Naive thymus-derived CD4-positive, alpha-beta T cell (primary cell): ENCODE measurements at regions of chr17 and their contacts with region 1.

Region 1: DNA sequence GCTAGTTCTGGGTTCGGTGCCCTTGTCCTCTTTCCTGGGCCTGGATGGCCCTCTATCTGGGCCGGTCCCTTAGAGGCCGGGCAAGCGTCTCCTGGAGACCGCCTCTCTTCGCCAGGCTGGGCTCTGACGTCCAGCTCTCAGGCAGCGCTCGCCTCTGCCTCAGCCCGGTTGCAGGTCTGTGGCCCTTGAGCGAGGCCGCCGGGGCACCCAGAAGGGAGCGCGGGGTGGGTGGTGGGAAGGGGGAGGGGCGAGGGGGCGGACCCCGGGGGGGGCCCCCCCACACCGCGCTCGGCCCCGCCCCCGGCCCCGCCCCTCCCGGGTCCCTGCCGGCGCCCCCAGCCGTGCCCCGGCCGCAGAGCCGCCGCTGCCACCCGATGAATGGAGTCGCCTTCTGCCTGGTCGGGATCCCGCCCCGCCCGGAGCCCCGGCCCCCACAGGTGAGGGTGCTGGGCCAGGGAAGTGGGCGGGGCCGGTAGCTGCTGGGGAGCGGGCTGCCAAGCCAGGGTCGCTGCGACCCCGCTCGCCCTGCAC is at the start of gene ARHGAP23:
- DNase-seq: peak in 7 of 9 donors; percentile 18 to 50 (median 24)
- ATAC-seq: peak; percentile 66
- H3K4me3 ChIP-seq: peak within 1 kb of the TSS; percentile 46
- H3K4me3 Mint-ChIP-seq: peak within 1 kb of the TSS; percentile 61 to 81 (median 72)
- H3K27ac ChIP-seq: peak within 1 kb of the TSS; percentile 37
- H3K27ac Mint-ChIP-seq: peak within 1 kb of the TSS in 5 of 9 donors; percentile 20 to 83 (median 42)
- H3K4me1 ChIP-seq: peaks cover 5 to 10% of the 10 kb centered on the region in 2 donors
- H3K4me1 Mint-ChIP-seq: peaks cover 7 to 28% (median 12%) of the 10 kb centered on the region in 7 donors
- H3K27me3 ChIP-seq: peaks cover 0 to 9% of the 10 kb centered on the region in 2 donors
- H3K27me3 Mint-ChIP-seq: peaks cover 9 to 44% (median 20%) of the 10 kb centered on the region in 5 donors
- total RNA-seq, gene ARHGAP23: 0.24 to 1.3 (median 0.34) TPM in 3 of 5 experiments, not detected in the others

Region 2: GRCh38 chr17:38485146-38485468 is 56.9 kb after region 1 on chr17:
- CTCF ChIA-PET with region 1: interaction called, 4 read pairs
- POLR2A ChIA-PET with region 1: no interaction called
- intact Hi-C with region 1: loop called in 1 of 2 experiments (anchors 2 kb)
- DNase-seq: no peak
- ATAC-seq: no peak
- H3K4me3 ChIP-seq: no peak overlapping the region
- H3K4me3 Mint-ChIP-seq: no peak overlapping the region
- H3K27ac ChIP-seq: no peak overlapping the region
- H3K27ac Mint-ChIP-seq: no peak overlapping the region
- H3K4me1 ChIP-seq: no peaks in the 10 kb centered on the region
- H3K4me1 Mint-ChIP-seq: peaks cover 0 to 7% (median 5%) of the 10 kb centered on the region in 7 donors
- H3K27me3 ChIP-seq: no peaks in the 10 kb centered on the region
- H3K27me3 Mint-ChIP-seq: peaks cover 0 to 9% (median 0%) of the 10 kb centered on the region in 5 donors

Region 3: GRCh38 chr17:38667099-38667786 is 239.1 kb after region 1 on chr17:
- CTCF ChIA-PET with region 1: no interaction called
- POLR2A ChIA-PET with region 1: no interaction called
- intact Hi-C with region 1: loop called in 1 of 2 experiments (anchors 1 kb)
- DNase-seq: peak in 7 of 9 donors; percentile 16 to 66 (median 44)
- ATAC-seq: peak; percentile 80
- H3K4me3 ChIP-seq: no peak overlapping the region
- H3K4me3 Mint-ChIP-seq: no peak overlapping the region
- H3K27ac ChIP-seq: no peak overlapping the region
- H3K27ac Mint-ChIP-seq: no peak overlapping the region
- H3K4me1 ChIP-seq: no peaks in the 10 kb centered on the region
- H3K4me1 Mint-ChIP-seq: peaks cover 0 to 13% (median 8%) of the 10 kb centered on the region in 7 donors
- H3K27me3 ChIP-seq: peaks cover 0 to 6% of the 10 kb centered on the region in 2 donors
- H3K27me3 Mint-ChIP-seq: peaks cover 44 to 66% (median 56%) of the 10 kb centered on the region in 5 donors

Region 4: DNA sequence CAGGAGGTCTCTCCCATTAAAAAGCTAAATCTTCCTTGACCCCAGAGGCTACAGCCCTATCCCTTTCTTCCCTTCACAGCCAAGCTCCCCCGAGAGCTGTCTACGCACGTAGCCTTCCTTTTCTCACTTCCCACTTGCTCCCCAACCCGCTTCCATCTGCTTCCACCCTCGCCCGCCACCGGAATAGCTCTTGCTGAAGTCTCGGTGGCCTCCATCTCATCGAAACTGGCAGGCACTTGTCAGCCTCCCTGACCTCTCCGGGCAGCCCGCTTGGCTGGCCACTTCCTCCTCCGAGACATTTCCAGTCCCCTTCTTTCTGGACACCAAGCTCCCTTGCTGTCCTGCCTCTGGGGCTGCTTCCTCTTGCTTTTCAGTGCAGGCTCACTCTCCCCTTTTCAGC is 257.3 kb after region 1 on chr17:
- CTCF ChIA-PET with region 1: no interaction called
- POLR2A ChIA-PET with region 1: no interaction called
- intact Hi-C with region 1: no loop called
- DNase-seq: no peak
- ATAC-seq: no peak
- H3K4me3 ChIP-seq: no peak overlapping the region
- H3K4me3 Mint-ChIP-seq: peak overlapping the region in 1 of 10 donors; percentile 55
- H3K27ac ChIP-seq: no peak overlapping the region
- H3K27ac Mint-ChIP-seq: no peak overlapping the region
- H3K4me1 ChIP-seq: no peaks in the 10 kb centered on the region
- H3K4me1 Mint-ChIP-seq: peaks cover 0 to 7% (median 0%) of the 10 kb centered on the region in 7 donors
- H3K27me3 ChIP-seq: no peaks in the 10 kb centered on the region
- H3K27me3 Mint-ChIP-seq: peaks cover 0 to 9% (median 3%) of the 10 kb centered on the region in 5 donors